ENCODE measurements at regions of chr9 and their contacts with region 1.

Region 1: GRCh38 chr9:35563791-35564197 is 41.3 kb upstream of the TESK1 start:
- DNase-seq: peak; percentile 60 to 70
- H3K4me3 ChIP-seq: peak overlapping the region in 3 of 4 donors; percentile 16 to 27 (median 23)
- H3K27ac ChIP-seq: peak overlapping the region in 4 of 5 donors; percentile 35 to 76 (median 50)
- H3K4me1 ChIP-seq: peaks cover 14 to 28% (median 19%) of the 10 kb centered on the region in 4 donors
- H3K27me3 ChIP-seq: no peaks in the 10 kb centered on the region
- CTCF ChIP-seq: no peak
- EP300 ChIP-seq: no peak
- POLR2A ChIP-seq: no peak

Region 2: GRCh38 chr9:35619800-35620158 is 56.0 kb after region 1 on chr9:
- intact Hi-C with region 1: loop called (anchors 10 kb)
- DNase-seq: no peak
- H3K4me3 ChIP-seq: no peak overlapping the region
- H3K27ac ChIP-seq: no peak overlapping the region
- H3K4me1 ChIP-seq: peaks cover 0 to 27% (median 17%) of the 10 kb centered on the region in 4 donors
- H3K27me3 ChIP-seq: peaks cover 0 to 26% (median 0%) of the 10 kb centered on the region in 3 donors
- CTCF ChIP-seq: no peak
- EP300 ChIP-seq: no peak
- POLR2A ChIP-seq: no peak

Region 3: GRCh38 chr9:36036780-36037548 is 473.2 kb after region 1 on chr9 and contains the start of gene RECK:
- intact Hi-C with region 1: no loop called
- DNase-seq: peak; percentile 84 to 94
- H3K4me3 ChIP-seq: peak within 1 kb of the TSS; percentile 85 to 90 (median 87)
- H3K27ac ChIP-seq: peak within 1 kb of the TSS; percentile 79 to 90 (median 83)
- H3K4me1 ChIP-seq: peaks cover 0 to 57% (median 35%) of the 10 kb centered on the region in 4 donors
- H3K27me3 ChIP-seq: peaks cover 0 to 17% (median 9%) of the 10 kb centered on the region in 3 donors
- CTCF ChIP-seq: no peak
- EP300 ChIP-seq: no peak
- POLR2A ChIP-seq: no peak
- total RNA-seq, gene RECK: 4.3 to 19.3 (median 13.3) TPM

Measured in stomach (tissue), 19 donors.